Breast epithelium (tissue), 4 donors: ENCODE measurements at regions of chr3 and their contacts with region 1.

Region 1: GRCh38 chr3:97102641-97103040 is 288.2 kb downstream of the EPHA6 start:
- DNase-seq: no peak
- H3K4me3 ChIP-seq: no peak overlapping the region
- H3K27ac ChIP-seq: no peak overlapping the region
- H3K4me1 ChIP-seq: no peaks in the 10 kb centered on the region
- H3K27me3 ChIP-seq: no peaks in the 10 kb centered on the region
- CTCF ChIP-seq: no peak
- POLR2A ChIP-seq: no peak

Region 2: GRCh38 chr3:97515076-97515475 is 412.4 kb after region 1 on chr3:
- intact Hi-C with region 1: loop called (anchors 10 kb)
- DNase-seq: no peak
- H3K4me3 ChIP-seq: no peak overlapping the region
- H3K27ac ChIP-seq: no peak overlapping the region
- H3K4me1 ChIP-seq: no peaks in the 10 kb centered on the region
- H3K27me3 ChIP-seq: no peaks in the 10 kb centered on the region
- CTCF ChIP-seq: no peak
- POLR2A ChIP-seq: no peak

Region 3: GRCh38 chr3:98022978-98023820 is 920.6 kb after region 1 on chr3:
- intact Hi-C with region 1: loop called (anchors 5 kb)
- DNase-seq: peak; percentile 75 to 92
- H3K4me3 ChIP-seq: no peak overlapping the region
- H3K27ac ChIP-seq: no peak overlapping the region
- H3K4me1 ChIP-seq: no peaks in the 10 kb centered on the region
- H3K27me3 ChIP-seq: no peaks in the 10 kb centered on the region
- CTCF ChIP-seq: peak; percentile 90 to 96 (median 91)
- POLR2A ChIP-seq: no peak